Calu3 (cell line): ENCODE measurements at regions of chr12 and their contacts with region 1.

Region 1: GRCh38 chr12:30146561-30146960 is 362.8 kb upstream of the TMTC1 start:
- DNase-seq: no peak
- H3K4me3 Mint-ChIP-seq: no peak overlapping the region
- H3K27ac Mint-ChIP-seq: no peak overlapping the region
- H3K4me1 Mint-ChIP-seq: no peaks in the 10 kb centered on the region
- H3K27me3 Mint-ChIP-seq: peaks cover 56% of the 10 kb centered on the region
- CTCF ChIP-seq: no peak

Region 2: GRCh38 chr12:29807125-29807524 is 339.4 kb before region 1 on chr12:
- CTCF ChIA-PET with region 1: no interaction called
- intact Hi-C with region 1: no loop called
- DNase-seq: no peak
- H3K4me3 Mint-ChIP-seq: no peak overlapping the region
- H3K27ac Mint-ChIP-seq: no peak overlapping the region
- H3K4me1 Mint-ChIP-seq: no peaks in the 10 kb centered on the region
- H3K27me3 Mint-ChIP-seq: no peaks in the 10 kb centered on the region
- CTCF ChIP-seq: no peak

Region 3: DNA sequence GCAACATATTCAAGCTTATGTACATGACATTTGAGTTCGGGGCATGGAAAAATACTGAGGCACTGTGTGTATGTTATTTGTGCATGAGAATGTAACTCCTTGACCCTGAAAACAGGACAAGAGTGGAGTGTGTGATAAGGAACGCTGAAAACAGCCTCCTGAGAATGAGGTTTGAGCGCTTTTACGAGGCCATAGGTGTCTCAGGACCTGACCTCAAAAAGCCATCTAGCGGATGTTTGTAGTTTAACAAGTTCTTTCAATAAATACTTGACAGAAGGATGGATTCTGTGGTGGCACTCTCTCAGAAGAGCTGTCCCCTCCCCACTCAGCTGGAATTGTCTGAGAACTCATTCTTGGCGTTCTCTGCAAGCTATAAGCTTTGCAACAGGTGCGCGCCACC is 12.3 kb before region 1 on chr12:
- CTCF ChIA-PET with region 1: interaction called, 11 read pairs
- intact Hi-C with region 1: no loop called
- DNase-seq: no peak
- H3K4me3 Mint-ChIP-seq: no peak overlapping the region
- H3K27ac Mint-ChIP-seq: no peak overlapping the region
- H3K4me1 Mint-ChIP-seq: no peaks in the 10 kb centered on the region
- H3K27me3 Mint-ChIP-seq: no peaks in the 10 kb centered on the region
- CTCF ChIP-seq: peak; percentile 22